ENCODE measurements at regions of chr20 and their contacts with region 1.

Region 1: DNA sequence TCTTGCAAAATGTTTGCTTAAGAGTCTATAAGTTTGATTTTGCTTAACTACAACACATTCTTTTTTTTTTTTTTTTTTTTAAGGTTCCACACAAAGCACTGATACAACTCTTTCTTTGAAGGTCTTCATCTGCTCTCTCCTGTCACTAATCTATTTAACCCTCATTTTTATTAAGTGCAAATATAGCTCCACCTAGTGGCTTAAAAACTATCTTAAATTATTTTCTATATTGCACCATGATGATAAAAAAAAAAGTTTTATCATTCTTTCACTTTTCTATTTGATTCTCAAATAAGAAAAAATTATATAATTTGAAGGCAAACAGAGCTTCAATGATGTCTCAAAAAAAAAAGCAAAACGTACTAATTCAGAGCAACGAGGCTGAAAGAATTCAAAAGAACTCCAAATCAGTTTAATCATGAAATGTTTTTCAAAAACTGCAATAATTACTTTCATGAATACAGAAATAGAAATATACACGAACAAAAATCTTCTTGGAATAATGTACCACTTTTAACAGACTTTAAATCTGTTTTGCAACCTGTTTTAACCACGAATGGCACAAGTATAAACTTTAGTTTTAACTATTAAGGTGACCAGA is 12.8 kb downstream of the ESF1 start:
- DNase-seq: no peak
- H3K4me3 Mint-ChIP-seq: no peak overlapping the region
- H3K27ac Mint-ChIP-seq: no peak overlapping the region
- H3K4me1 Mint-ChIP-seq: peaks cover 7% of the 10 kb centered on the region
- H3K27me3 Mint-ChIP-seq: no peaks in the 10 kb centered on the region

Region 2: GRCh38 chr20:13755809-13756208 is 16.1 kb before region 1 on chr20:
- CTCF ChIA-PET with region 1: interaction called, 13 read pairs
- POLR2A ChIA-PET with region 1: no interaction called
- DNase-seq: no peak
- H3K4me3 Mint-ChIP-seq: no peak overlapping the region
- H3K27ac Mint-ChIP-seq: no peak overlapping the region
- H3K4me1 Mint-ChIP-seq: no peaks in the 10 kb centered on the region
- H3K27me3 Mint-ChIP-seq: no peaks in the 10 kb centered on the region

Region 3: DNA sequence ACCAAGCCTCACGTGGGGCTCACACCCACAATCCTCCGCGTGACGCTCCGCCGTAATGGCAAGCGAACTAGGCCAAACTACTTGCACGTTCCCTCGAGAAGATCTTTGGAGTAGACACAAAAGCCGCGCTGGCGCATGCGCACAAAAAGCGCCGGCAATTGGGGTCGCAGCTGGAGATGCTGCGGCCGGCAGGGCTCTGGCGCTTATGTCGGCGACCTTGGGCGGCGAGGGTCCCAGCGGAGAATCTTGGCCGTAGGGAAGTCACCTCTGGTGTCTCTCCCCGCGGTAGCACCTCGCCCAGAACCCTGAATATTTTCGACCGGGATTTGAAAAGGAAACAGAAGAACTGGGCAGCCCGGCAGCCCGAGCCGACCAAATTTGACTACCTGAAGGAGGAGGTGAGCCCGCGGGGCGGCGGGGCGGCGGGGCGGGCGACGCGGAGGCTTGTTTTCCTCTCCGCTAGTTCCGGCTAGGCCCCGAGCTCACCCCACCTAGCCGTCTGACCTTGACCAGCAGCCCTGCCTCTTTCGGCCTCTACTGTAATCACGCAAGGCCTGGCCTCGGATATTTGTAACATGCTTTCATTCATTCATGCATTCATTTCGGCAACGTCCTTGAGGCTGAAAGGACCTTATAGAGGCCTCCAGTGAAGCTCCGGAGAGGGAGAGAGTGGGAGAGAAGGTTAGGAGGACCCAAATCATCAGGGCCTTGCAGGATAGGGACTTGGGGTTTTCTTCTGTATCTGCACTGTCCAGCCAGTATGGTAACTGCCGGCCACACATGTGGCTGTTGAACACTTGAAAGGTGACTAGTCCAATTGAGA is 13.2 kb after region 1 on chr20 and contains the starts of genes ESF1 and NDUFAF5:
- CTCF ChIA-PET with region 1: interaction called, 16 read pairs
- POLR2A ChIA-PET with region 1: no interaction called
- DNase-seq: peak; percentile 96
- H3K4me3 Mint-ChIP-seq: peak within 1 kb of the TSS; percentile 90
- H3K27ac Mint-ChIP-seq: peak within 1 kb of the TSS; percentile 93
- H3K4me1 Mint-ChIP-seq: peaks cover 44% of the 10 kb centered on the region
- H3K27me3 Mint-ChIP-seq: no peaks in the 10 kb centered on the region
- total RNA-seq, gene ESF1: 12.4 to 12.7 TPM
- total RNA-seq, gene NDUFAF5: 21.2 to 25.4 TPM